Mucosa of descending colon (tissue), 3 donors: ENCODE measurements at regions of chr1 and their contacts with region 1.

Region 1: GRCh38 chr1:179809506-179810366 is 66.6 kb downstream of the FAM163A start:
- DNase-seq: peak in 2 of 3 donors; percentile 49 to 58
- ATAC-seq: peak; percentile 71
- H3K4me3 ChIP-seq: no peak overlapping the region
- H3K4me1 ChIP-seq: peaks cover 4% of the 10 kb centered on the region
- CTCF ChIP-seq: peak; percentile 83

Region 2: DNA sequence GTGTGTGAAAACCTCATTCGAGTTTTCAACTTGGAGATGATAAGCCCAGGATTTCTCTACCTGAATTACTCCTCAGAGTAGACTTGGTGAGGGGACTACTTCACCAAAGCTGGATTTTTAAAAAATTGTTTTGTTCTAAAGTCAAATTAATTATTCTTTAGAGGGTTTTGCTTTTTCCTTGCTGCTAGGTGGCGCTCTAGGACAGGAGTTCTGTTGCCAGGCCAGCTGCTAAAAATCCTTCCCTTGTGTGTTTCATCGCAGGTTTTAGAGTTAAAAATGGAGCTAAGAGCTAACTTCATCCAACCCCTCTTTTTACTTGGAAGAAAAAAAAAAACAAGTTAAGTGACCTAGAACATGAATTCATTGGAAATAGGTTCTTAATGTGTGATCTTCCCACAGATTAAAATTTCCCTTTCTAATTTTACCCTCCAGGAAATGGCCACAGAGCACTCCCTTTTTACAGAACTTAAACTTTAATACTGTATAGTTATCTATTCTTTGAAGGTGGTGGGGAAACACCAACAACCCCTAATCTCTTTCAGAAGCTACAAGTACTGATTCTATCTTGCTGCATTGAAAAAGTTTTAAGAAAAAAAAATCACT is 103.3 kb before region 1 on chr1:
- intact Hi-C with region 1: loop called (anchors 5 kb)
- DNase-seq: peak in 2 of 3 donors; percentile 27 to 54
- ATAC-seq: peak; percentile 35
- H3K4me3 ChIP-seq: no peak overlapping the region
- H3K4me1 ChIP-seq: no peaks in the 10 kb centered on the region
- CTCF ChIP-seq: peak; percentile 28

Region 3: GRCh38 chr1:180309338-180309737 is 499.6 kb after region 1 on chr1:
- intact Hi-C with region 1: no loop called
- DNase-seq: no peak
- ATAC-seq: peak; percentile 72
- H3K4me3 ChIP-seq: no peak overlapping the region
- H3K4me1 ChIP-seq: no peaks in the 10 kb centered on the region
- CTCF ChIP-seq: no peak

Region 4: DNA sequence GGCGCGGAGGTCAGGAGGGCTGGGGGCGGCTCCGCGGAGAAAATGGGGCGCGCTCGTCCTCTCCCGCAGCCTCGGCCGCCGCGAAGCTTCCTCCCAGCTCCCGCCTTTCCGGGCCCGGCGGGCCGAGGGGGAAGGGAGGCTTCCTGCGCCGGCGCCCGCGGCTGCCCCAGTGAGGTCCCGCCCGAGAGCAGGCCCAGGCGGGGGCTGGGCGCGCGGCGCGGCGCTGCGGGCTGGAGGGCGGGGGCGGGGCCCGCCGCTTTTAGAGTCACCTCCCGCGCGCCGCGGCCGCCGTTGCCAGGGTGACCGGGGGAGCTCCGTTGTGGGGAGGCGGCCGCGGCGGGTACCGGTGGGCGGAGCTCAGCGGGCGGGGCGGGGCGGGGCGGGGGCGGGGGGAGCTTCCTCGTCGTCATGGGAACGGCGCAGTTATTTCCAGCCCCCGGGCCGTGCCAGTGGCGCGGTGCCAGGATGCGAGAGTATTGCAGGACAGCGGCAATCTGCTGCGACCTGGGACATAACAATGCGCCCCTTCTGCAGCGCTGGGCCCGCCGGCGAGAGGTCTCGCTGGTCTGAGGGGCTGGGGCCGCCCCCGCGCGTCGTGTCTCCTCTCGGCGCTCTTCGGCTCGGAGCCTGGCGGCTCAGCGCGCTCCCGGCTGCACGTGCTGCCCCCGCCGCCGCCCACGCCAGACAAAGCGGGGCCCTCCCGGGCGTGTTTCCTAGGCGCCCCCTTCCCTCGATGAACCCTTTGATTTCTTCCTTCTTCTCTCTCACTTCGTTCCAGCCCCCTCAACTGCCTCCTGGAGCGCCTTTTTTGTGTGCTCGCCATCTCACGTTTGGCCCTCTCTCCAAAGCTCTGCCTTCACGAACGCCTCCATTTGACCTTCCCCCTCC is 1295.6 kb after region 1 on chr1:
- intact Hi-C with region 1: no loop called
- DNase-seq: peak; percentile 95 to 97 (median 97)
- ATAC-seq: peak; percentile 95
- H3K4me3 ChIP-seq: peak overlapping the region; percentile 22
- H3K4me1 ChIP-seq: peaks cover 13% of the 10 kb centered on the region
- CTCF ChIP-seq: no peak